ENCODE measurements at regions of chr7 and their contacts with region 1.

Region 1: GRCh38 chr7:16645593-16646471 is at the starts of genes ANKMY2 and BZW2:
- DNase-seq: peak; percentile 93
- H3K4me3 Mint-ChIP-seq: peak within 1 kb of the TSS; percentile 97
- H3K27ac Mint-ChIP-seq: peak within 1 kb of the TSS; percentile 97
- H3K4me1 Mint-ChIP-seq: peaks cover 51% of the 10 kb centered on the region
- H3K27me3 Mint-ChIP-seq: no peaks in the 10 kb centered on the region
- total RNA-seq, gene ANKMY2: 8.7 TPM in 2 replicates
- total RNA-seq, gene BZW2: 82.9 and 90.2 TPM in 2 replicates

Region 2: GRCh38 chr7:16420649-16421332 is 225.0 kb before region 1 on chr7:
- intact Hi-C with region 1: loop called (anchors 1 kb)
- DNase-seq: peak; percentile 86
- H3K4me3 Mint-ChIP-seq: peak overlapping the region; percentile 91
- H3K27ac Mint-ChIP-seq: peak overlapping the region; percentile 96
- H3K4me1 Mint-ChIP-seq: peaks cover 25% of the 10 kb centered on the region
- H3K27me3 Mint-ChIP-seq: peaks cover 8% of the 10 kb centered on the region

Region 3: DNA sequence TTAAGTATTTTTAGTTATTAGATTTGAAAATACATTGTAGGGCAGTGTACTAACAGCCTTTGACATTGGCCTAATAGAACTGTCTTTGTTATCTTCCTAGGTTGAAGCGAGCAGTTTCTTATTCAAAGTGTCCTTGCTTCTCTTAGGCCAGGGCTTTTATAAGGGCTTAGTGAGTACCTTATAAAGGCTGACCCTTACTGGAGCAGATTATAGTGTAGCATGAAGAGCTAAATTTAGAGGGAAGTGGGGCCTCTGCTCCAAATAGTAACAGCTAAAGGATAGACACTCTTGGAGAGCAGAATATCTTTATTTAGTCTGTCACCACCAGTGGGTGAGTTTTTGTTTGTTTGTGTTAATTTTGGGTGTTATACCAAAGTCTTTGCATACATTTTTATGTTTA is 16.1 kb after region 1 on chr7:
- intact Hi-C with region 1: loop called (anchors 2 kb)
- DNase-seq: no peak
- H3K4me3 Mint-ChIP-seq: no peak overlapping the region
- H3K27ac Mint-ChIP-seq: no peak overlapping the region
- H3K4me1 Mint-ChIP-seq: peaks cover 21% of the 10 kb centered on the region
- H3K27me3 Mint-ChIP-seq: no peaks in the 10 kb centered on the region

Region 4: GRCh38 chr7:16753102-16753931 is 107.5 kb after region 1 on chr7 and contains the start of gene TSPAN13:
- intact Hi-C with region 1: loop called (anchors 5 kb)
- DNase-seq: peak; percentile 67
- H3K4me3 Mint-ChIP-seq: peak within 1 kb of the TSS; percentile 83
- H3K27ac Mint-ChIP-seq: no peak within 1 kb of the TSS
- H3K4me1 Mint-ChIP-seq: peaks cover 21% of the 10 kb centered on the region
- H3K27me3 Mint-ChIP-seq: peaks cover 33% of the 10 kb centered on the region
- total RNA-seq, gene TSPAN13: 1.3 and 2.0 TPM in 2 replicates

Region 5: GRCh38 chr7:17009007-17009719 is 363.3 kb after region 1 on chr7:
- intact Hi-C with region 1: no loop called
- DNase-seq: no peak
- H3K4me3 Mint-ChIP-seq: no peak overlapping the region
- H3K27ac Mint-ChIP-seq: no peak overlapping the region
- H3K4me1 Mint-ChIP-seq: peaks cover 39% of the 10 kb centered on the region
- H3K27me3 Mint-ChIP-seq: peaks cover 9% of the 10 kb centered on the region

Region 6: GRCh38 chr7:17940302-17940883 is 1294.6 kb after region 1 on chr7 and contains the start of gene SNX13:
- intact Hi-C with region 1: loop called (anchors 10 kb)
- DNase-seq: peak; percentile 84
- H3K4me3 Mint-ChIP-seq: peak within 1 kb of the TSS; percentile 97
- H3K27ac Mint-ChIP-seq: peak within 1 kb of the TSS; percentile 94
- H3K4me1 Mint-ChIP-seq: peaks cover 36% of the 10 kb centered on the region
- H3K27me3 Mint-ChIP-seq: peaks cover 10% of the 10 kb centered on the region
- total RNA-seq, gene SNX13: 21.2 and 21.9 TPM in 2 replicates

Measured in activated T-helper 2 cell treated with anti-CD3 and anti-CD28 coated beads, Interferon-gamma antibody, Interleukin-2, Interleukin-4, amounts not matched to agents 10 μg/mL and 5 μg/mL and 100 μg/mL, durations not matched to agents 14 hours and 24 hours and 36 hours (primary cell).